PC-3 (cell line): ENCODE measurements at regions of chr14 and their contacts with region 1.

Region 1: DNA sequence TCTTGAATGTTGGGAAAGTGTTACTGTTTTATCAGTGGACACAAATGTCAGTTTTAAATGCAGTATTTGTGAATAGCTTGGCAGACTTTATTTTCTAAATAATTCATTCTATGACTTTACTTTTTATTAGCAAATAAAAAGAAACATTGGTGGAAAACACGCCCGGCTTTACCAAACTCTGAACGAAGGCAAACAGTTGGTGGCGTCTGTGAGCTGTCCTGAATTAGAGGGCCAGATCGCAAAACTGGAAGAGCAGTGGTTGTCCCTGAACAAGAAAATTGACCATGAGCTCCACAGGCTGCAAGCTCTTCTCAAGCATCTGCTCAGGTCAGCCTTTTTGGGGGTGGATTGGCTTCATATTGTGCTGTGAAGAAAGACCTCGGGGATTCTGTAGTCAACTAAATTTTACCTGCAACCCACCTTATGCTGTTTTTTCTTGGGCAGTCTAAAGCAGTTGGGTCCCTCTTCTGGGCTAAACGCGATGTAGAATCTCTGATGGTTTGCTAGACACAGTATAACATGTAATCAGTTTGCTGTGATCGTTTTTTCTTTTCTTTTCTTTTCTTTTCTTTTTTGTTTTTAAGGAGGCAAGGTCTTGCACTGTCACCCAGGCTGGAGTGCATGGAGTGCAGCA is 156.4 kb downstream of the ESR2 start:
- DNase-seq: peak; percentile 64
- ATAC-seq: peak; percentile 92
- H3K4me3 ChIP-seq: no peak overlapping the region
- H3K27ac ChIP-seq: no peak overlapping the region
- H3K4me1 ChIP-seq: no peaks in the 10 kb centered on the region
- H3K27me3 ChIP-seq: no peaks in the 10 kb centered on the region
- CTCF ChIP-seq: peak; percentile 78

Region 2: DNA sequence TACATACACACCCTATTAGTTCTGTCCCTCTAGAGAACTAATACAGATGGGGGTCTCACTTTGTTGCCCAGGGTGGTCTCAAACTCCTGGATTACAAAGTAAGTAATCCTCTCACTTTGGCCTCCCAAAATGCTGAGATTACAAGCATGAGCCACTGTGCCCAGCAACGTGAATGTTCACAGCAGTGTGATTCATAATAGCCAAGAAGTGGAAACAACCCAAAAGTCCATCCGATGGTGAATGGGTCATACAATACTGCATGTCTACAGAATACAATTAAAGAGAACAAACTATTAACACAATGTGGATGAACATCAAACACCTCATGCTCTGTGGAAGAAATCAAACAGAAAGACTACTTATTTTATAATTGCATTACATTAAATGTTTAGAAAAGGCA is 342.2 kb before region 1 on chr14:
- CTCF ChIA-PET with region 1: no interaction called
- POLR2A ChIA-PET with region 1: no interaction called
- intact Hi-C with region 1: loop called (anchors 10 kb)
- DNase-seq: no peak
- ATAC-seq: no peak
- H3K4me3 ChIP-seq: no peak overlapping the region
- H3K27ac ChIP-seq: no peak overlapping the region
- H3K4me1 ChIP-seq: no peaks in the 10 kb centered on the region
- H3K27me3 ChIP-seq: no peaks in the 10 kb centered on the region
- CTCF ChIP-seq: no peak

Region 3: DNA sequence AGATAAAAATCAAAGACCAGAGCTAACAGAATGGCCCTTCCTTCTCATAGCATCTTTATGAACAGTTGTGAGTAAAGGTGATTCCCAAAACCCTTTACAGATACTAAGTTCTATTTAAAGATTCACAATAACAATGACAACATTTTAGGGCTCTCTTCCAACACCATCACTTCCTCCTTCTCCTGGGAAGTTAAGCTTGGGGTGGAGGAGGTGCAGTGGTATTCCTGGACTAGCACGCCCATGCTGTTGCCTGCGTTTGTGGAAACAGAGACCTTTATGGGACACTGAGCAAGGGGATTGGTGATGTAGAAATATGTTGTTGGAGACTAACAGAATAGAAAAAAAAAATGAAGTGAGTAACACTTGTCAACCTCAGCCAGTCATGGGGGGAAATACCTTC is 262.5 kb before region 1 on chr14:
- CTCF ChIA-PET with region 1: no interaction called
- POLR2A ChIA-PET with region 1: no interaction called
- intact Hi-C with region 1: no loop called
- DNase-seq: peak; percentile 43
- ATAC-seq: peak; percentile 37
- H3K4me3 ChIP-seq: no peak overlapping the region
- H3K27ac ChIP-seq: no peak overlapping the region
- H3K4me1 ChIP-seq: peaks cover 15% of the 10 kb centered on the region; the same call in 1 of the 2 replicates
- H3K27me3 ChIP-seq: no peaks in the 10 kb centered on the region
- CTCF ChIP-seq: no peak

Region 4: DNA sequence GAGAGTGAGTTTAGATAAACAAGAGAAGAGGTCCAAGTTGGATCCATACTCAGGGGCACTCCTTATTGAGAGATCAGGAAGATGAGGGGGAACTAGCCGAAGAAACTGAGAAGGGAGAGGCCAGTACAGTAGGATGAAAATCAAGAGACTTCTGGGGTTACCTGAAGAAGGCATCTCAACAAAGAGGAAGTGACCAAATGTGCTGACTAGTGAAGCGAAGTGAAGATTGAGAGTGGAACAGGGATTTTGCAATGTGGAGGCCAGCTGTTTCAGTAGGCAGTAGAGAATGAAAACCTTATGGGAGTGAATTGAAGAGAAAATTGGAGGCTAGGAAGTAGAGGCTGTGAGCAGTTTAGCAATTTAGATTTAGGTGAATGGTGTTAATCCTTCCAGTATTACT is 132.0 kb before region 1 on chr14:
- CTCF ChIA-PET with region 1: interaction called, 10 read pairs
- POLR2A ChIA-PET with region 1: no interaction called
- intact Hi-C with region 1: no loop called
- DNase-seq: no peak
- ATAC-seq: no peak
- H3K4me3 ChIP-seq: no peak overlapping the region
- H3K27ac ChIP-seq: no peak overlapping the region
- H3K4me1 ChIP-seq: no peaks in the 10 kb centered on the region
- H3K27me3 ChIP-seq: no peaks in the 10 kb centered on the region
- CTCF ChIP-seq: no peak

Region 5: GRCh38 chr14:64040044-64040443 is 97.7 kb before region 1 on chr14:
- CTCF ChIA-PET with region 1: interaction called, 11 read pairs
- POLR2A ChIA-PET with region 1: no interaction called
- intact Hi-C with region 1: loop called (anchors 1 kb)
- DNase-seq: peak; percentile 37
- ATAC-seq: 0 out of 2 replicates have a peak, but pooled peaks have one; percentile 19
- H3K4me3 ChIP-seq: no peak overlapping the region
- H3K27ac ChIP-seq: no peak overlapping the region
- H3K4me1 ChIP-seq: no peaks in the 10 kb centered on the region
- H3K27me3 ChIP-seq: no peaks in the 10 kb centered on the region
- CTCF ChIP-seq: peak; percentile 76

Region 6: GRCh38 chr14:64060648-64061096 is 77.1 kb before region 1 on chr14:
- CTCF ChIA-PET with region 1: interaction called, 11 read pairs
- POLR2A ChIA-PET with region 1: no interaction called
- intact Hi-C with region 1: no loop called
- DNase-seq: peak; percentile 69
- ATAC-seq: peak; percentile 54
- H3K4me3 ChIP-seq: no peak overlapping the region
- H3K27ac ChIP-seq: peak overlapping the region; percentile 18; the same call in 1 of the 2 replicates
- H3K4me1 ChIP-seq: peaks cover 25% of the 10 kb centered on the region
- H3K27me3 ChIP-seq: no peaks in the 10 kb centered on the region
- CTCF ChIP-seq: peak; percentile 69

Region 7: GRCh38 chr14:64074961-64075612 is 62.7 kb before region 1 on chr14:
- CTCF ChIA-PET with region 1: no interaction called
- POLR2A ChIA-PET with region 1: no interaction called
- intact Hi-C with region 1: loop called (anchors 5 kb)
- DNase-seq: peak; percentile 90
- ATAC-seq: peak; percentile 98
- H3K4me3 ChIP-seq: no peak overlapping the region
- H3K27ac ChIP-seq: peak overlapping the region; percentile 70
- H3K4me1 ChIP-seq: peaks cover 19% of the 10 kb centered on the region
- H3K27me3 ChIP-seq: no peaks in the 10 kb centered on the region
- CTCF ChIP-seq: no peak